ENCODE measurements at regions of chr18 and their contacts with region 1.

Region 1: GRCh38 chr18:43161528-43161927 is 46.0 kb upstream of the RIT2 start:
- DNase-seq: no peak
- ATAC-seq: no peak

Region 2: DNA sequence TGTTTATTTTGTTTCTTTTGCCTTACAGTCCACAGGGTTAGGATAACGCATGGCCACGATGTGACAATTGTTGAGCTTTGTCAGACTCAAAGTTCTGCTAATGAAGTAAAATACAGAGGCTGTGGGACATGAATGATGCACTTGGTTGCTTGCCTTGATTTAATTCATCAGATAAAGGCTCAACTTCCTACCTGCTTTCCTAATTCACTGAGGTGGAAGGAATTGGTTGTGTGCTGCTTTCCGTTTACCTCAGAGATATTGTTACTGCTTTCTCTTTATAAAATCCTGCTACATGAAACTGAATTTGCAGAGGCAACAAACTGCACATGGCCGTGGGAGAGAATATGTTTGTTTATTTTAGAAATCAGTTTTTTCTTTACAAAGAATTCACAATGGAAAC is 52.6 kb before region 1 on chr18:
- intact Hi-C with region 1: loop called in 1 of 2 experiments (anchors 10 kb)
- DNase-seq: no peak
- ATAC-seq: no peak

Region 3: GRCh38 chr18:44771956-44772917 is 1610.7 kb after region 1 on chr18:
- intact Hi-C with region 1: no loop called
- DNase-seq: peak; percentile 62 to 71
- ATAC-seq: peak; percentile 94

Measured in left colon (tissue), 2 donors.